ENCODE measurements at regions of chr11 and their contacts with region 1.

Region 1: DNA sequence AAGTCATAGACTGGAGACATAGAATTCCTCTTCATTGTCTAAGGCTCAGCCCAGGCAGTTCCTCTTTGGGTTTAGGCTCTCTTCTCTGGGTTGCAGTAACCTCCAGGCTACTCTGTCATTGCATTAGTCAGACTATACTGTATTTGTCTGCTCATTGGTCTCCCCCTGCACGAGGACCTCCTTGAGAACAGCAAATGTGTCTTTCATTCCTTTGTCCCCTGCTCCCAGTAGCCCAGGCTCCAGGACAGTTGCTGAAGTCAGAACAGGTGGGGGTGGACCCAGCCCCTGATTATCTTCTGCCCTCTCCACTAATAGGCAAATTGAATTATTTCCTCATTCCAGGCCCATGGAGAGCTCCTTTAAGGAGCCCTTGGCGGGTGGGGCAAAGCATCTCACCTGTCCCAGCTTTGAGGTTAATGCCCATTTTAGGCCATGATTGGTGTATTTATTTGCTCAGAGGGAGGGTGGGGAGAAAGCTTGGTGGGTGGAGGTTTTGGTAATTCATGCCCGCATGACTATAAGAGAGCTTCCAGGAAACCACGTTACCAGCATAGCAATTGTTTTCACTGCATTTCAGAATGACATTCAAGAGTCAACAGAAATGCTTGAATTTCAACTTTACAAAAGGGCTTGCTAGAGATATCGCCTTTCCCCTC is 40.9 kb downstream of the NAV2 start:
- DNase-seq: peak; percentile 78 to 88
- H3K4me3 ChIP-seq: no peak overlapping the region
- H3K27ac ChIP-seq: peak overlapping the region; percentile 80
- H3K4me1 ChIP-seq: peaks cover 27% of the 10 kb centered on the region
- H3K27me3 ChIP-seq: no peaks in the 10 kb centered on the region
- CTCF ChIP-seq: no peak

Region 2: DNA sequence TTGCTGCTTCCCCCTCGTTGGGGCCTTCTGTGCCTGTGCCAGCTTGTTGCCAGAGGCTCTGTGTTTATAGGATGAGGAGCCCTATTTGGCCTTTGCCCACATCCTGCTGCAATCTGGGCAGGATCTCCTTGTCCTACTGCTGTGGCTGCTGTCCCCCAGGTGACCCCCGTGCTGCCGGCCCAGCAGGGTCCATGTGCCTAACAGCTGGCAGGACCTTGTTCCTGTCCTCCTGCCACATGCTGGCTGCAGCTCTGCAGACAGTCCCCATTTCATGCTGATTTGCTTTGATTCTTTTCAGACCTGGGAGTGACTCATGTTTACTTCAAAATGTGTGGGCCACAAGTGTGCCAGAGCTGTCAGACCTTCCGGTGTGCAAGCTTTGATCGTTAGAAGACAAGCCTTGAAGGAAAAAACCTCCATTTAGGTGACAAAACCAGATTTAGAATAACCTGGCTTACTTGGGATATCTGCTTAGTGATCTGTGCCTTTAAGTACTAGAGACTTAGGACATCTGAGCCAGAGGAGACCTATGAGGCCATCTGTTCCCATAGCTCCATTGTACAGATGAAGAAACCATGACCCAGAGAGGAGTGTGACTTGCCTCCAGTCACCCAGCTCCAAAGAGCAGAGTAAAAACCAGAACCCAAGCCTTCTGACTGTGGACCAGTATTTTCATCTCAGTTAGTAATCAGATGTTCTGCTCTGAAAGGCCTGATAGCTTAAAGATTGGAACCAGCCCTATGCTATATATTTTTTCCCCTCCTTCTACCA is 29.8 kb before region 1 on chr11:
- CTCF ChIA-PET with region 1: no interaction called
- POLR2A ChIA-PET with region 1: no interaction called
- intact Hi-C with region 1: no loop called
- DNase-seq: peak; percentile 78 to 94
- H3K4me3 ChIP-seq: no peak overlapping the region
- H3K27ac ChIP-seq: peak overlapping the region; percentile 82
- H3K4me1 ChIP-seq: peaks cover 77% of the 10 kb centered on the region
- H3K27me3 ChIP-seq: no peaks in the 10 kb centered on the region
- CTCF ChIP-seq: no peak

Region 3: GRCh38 chr11:19800162-19800561 is 46.6 kb after region 1 on chr11:
- CTCF ChIA-PET with region 1: no interaction called
- POLR2A ChIA-PET with region 1: no interaction called
- intact Hi-C with region 1: loop called (anchors 1 kb)
- DNase-seq: no peak
- H3K4me3 ChIP-seq: no peak overlapping the region
- H3K27ac ChIP-seq: peak overlapping the region; percentile 43
- H3K4me1 ChIP-seq: peaks cover 57% of the 10 kb centered on the region
- H3K27me3 ChIP-seq: no peaks in the 10 kb centered on the region
- CTCF ChIP-seq: no peak; the same call in 1 of the 2 replicates

Measured in PC-9 (cell line).